H1 (cell line): ENCODE measurements at regions of chr2 and their contacts with region 1.

Region 1: GRCh38 chr2:47402805-47403608 is at the start of gene MSH2:
- DNase-seq: peak; percentile 91 to 95
- H3K4me3 ChIP-seq: peak within 1 kb of the TSS; percentile 67 to 92 (median 88)
- H3K27ac ChIP-seq: peak within 1 kb of the TSS; percentile 93
- H3K4me1 ChIP-seq: peaks cover 3 to 12% (median 7%) of the 10 kb centered on the region in 4 experiments; a peak in 5 of 7 replicates
- H3K27me3 ChIP-seq: no peaks in the 10 kb centered on the region
- CTCF ChIP-seq: peak in 2 of 3 experiments; percentile 0 to 2; a peak in 2 of 4 replicates
- EP300 ChIP-seq: peak in 1 of 2 experiments; percentile 85; a peak in 1 of 3 replicates
- POLR2A ChIP-seq: peak in 1 of 2 experiments; percentile 78; a peak in 2 of 3 replicates
- RAD21 ChIP-seq: peak; percentile 25 to 33; a peak in 3 of 4 replicates
- total RNA-seq, gene MSH2: 204 and 228 TPM in 2 replicates

Region 2: GRCh38 chr2:47056875-47057686 is 345.9 kb before region 1 on chr2:
- CTCF ChIA-PET with region 1: no interaction called
- POLR2A ChIA-PET with region 1: no interaction called
- DNase-seq: no peak
- H3K4me3 ChIP-seq: no peak overlapping the region
- H3K27ac ChIP-seq: no peak overlapping the region
- H3K4me1 ChIP-seq: peaks cover 3 to 19% (median 9%) of the 10 kb centered on the region in 4 experiments
- H3K27me3 ChIP-seq: no peaks in the 10 kb centered on the region
- CTCF ChIP-seq: no peak
- EP300 ChIP-seq: no peak
- POLR2A ChIP-seq: no peak
- RAD21 ChIP-seq: no peak

Region 3: GRCh38 chr2:47109007-47109375 is 294.0 kb before region 1 on chr2:
- CTCF ChIA-PET with region 1: no interaction called
- POLR2A ChIA-PET with region 1: no interaction called
- DNase-seq: no peak
- H3K4me3 ChIP-seq: no peak overlapping the region
- H3K27ac ChIP-seq: no peak overlapping the region
- H3K4me1 ChIP-seq: no peaks in the 10 kb centered on the region
- H3K27me3 ChIP-seq: no peaks in the 10 kb centered on the region
- CTCF ChIP-seq: no peak
- EP300 ChIP-seq: no peak
- POLR2A ChIP-seq: no peak
- RAD21 ChIP-seq: no peak

Region 4: GRCh38 chr2:47336259-47337238 is 66.5 kb before region 1 on chr2:
- CTCF ChIA-PET with region 1: interaction called, 15 read pairs
- POLR2A ChIA-PET with region 1: interaction called, 14 read pairs
- DNase-seq: no peak
- H3K4me3 ChIP-seq: no peak overlapping the region
- H3K27ac ChIP-seq: no peak overlapping the region
- H3K4me1 ChIP-seq: peaks cover 0 to 21% (median 11%) of the 10 kb centered on the region in 4 experiments
- H3K27me3 ChIP-seq: no peaks in the 10 kb centered on the region
- CTCF ChIP-seq: no peak
- EP300 ChIP-seq: no peak
- POLR2A ChIP-seq: no peak
- RAD21 ChIP-seq: no peak

Region 5: DNA sequence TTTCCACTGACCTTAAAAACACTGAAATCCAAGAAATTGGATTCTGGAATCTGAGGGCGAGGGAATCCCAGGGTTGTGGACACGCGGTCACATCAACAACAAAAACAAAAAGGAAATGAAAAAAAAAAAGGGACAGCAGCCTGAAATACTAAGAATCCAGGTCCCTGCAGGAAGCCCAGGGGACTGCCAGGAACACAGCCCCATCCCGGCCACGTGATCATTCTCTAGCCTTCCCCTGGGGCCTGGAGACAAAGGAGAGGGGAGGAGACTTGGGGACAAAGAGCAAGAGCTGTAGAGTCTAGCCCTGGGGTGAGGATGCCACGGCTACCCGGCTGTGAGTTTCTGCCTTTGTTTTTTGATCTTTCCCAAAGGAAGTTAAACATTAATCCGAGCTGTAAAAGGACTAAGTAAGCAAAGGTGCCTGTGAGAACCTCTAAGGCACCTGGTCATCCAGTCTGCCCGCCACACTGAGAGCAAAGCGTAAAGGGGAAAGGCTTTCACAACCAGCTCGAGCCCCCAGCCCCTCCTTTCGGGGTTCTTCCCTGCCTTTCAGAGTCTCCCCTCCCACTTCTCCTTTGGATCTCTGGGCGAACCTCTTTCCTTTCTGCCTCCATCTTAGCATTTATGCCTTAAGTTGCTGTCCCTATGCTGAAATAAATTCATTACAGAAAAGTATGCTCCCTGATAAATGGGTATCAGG is 58.0 kb before region 1 on chr2:
- CTCF ChIA-PET with region 1: interaction called, 3 read pairs
- POLR2A ChIA-PET with region 1: interaction called, 31 read pairs
- DNase-seq: peak; percentile 85 to 96
- H3K4me3 ChIP-seq: peak overlapping the region; percentile 31 to 57 (median 50); a peak in 7 of 8 replicates
- H3K27ac ChIP-seq: peak overlapping the region; percentile 97
- H3K4me1 ChIP-seq: peaks cover 7 to 18% (median 11%) of the 10 kb centered on the region in 4 experiments; a peak in 6 of 7 replicates
- H3K27me3 ChIP-seq: no peaks in the 10 kb centered on the region
- CTCF ChIP-seq: peak in 2 of 3 experiments; percentile 20 to 27; a peak in 2 of 4 replicates
- EP300 ChIP-seq: no peak
- POLR2A ChIP-seq: peak; percentile 96 to 99
- RAD21 ChIP-seq: peak in 1 of 2 experiments; percentile 9; a peak in 2 of 4 replicates

Region 6: DNA sequence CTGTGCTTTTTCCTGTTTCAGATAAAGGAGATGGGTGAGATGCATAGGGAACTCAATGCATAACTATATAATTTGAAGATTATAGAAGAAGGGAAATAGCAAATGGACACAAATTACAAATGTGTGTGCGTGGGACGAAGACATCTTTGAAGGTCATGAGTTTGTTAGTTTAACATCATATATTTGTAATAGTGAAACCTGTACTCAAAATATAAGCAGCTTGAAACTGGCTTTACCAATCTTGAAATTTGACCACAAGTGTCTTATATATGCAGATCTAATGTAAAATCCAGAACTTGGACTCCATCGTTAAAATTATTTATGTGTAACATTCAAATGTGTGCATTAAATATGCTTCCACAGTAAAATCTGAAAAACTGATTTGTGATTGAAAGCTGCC is 16.5 kb before region 1 on chr2:
- CTCF ChIA-PET with region 1: interaction called, 15 read pairs
- POLR2A ChIA-PET with region 1: interaction called, 13 read pairs
- DNase-seq: no peak
- H3K4me3 ChIP-seq: no peak overlapping the region
- H3K27ac ChIP-seq: no peak overlapping the region
- H3K4me1 ChIP-seq: no peaks in the 10 kb centered on the region
- H3K27me3 ChIP-seq: no peaks in the 10 kb centered on the region
- CTCF ChIP-seq: no peak
- EP300 ChIP-seq: no peak
- POLR2A ChIP-seq: no peak
- RAD21 ChIP-seq: no peak

Region 7: DNA sequence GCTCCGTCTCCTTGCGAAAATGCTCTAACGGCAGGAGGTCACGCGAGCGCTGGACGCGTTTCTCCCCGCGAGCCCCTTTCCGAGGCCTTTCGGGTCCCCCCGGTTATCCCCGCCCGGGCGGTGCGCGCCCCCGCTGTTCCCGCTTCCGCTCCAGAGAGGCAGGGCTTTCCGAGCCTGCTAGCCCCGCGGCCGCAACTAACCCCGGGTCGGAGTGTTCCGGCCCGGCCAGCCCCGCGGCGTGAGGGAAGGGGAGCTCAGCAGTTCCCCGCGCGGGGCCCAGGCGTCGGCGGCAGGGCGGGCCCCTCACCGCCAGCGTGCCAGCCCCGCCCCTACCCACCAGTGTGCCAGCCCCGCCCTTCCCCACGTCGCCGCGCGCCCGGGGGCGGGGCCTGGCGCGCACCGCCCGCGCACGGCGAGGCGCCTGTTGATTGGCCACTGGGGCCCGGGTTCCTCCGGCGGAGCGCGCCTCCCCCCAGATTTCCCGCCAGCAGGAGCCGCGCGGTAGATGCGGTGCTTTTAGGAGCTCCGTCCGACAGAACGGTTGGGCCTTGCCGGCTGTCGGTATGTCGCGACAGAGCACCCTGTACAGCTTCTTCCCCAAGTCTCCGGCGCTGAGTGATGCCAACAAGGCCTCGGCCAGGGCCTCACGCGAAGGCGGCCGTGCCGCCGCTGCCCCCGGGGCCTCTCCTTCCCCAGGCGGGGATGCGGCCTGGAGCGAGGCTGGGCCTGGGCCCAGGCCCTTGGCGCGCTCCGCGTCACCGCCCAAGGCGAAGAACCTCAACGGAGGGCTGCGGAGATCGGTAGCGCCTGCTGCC is 379.9 kb after region 1 on chr2 and contains the start of gene MSH6:
- CTCF ChIA-PET with region 1: no interaction called
- POLR2A ChIA-PET with region 1: interaction called, 12 read pairs
- DNase-seq: peak; percentile 62 to 91
- H3K4me3 ChIP-seq: peak within 1 kb of the TSS; percentile 62 to 98 (median 92)
- H3K27ac ChIP-seq: peak within 1 kb of the TSS; percentile 93
- H3K4me1 ChIP-seq: peaks cover 1 to 8% (median 3%) of the 10 kb centered on the region in 4 experiments; a peak in 5 of 7 replicates
- H3K27me3 ChIP-seq: no peaks in the 10 kb centered on the region
- CTCF ChIP-seq: peak in 1 of 3 experiments; percentile 1; a peak in 1 of 4 replicates
- EP300 ChIP-seq: no peak
- POLR2A ChIP-seq: peak; percentile 91 to 92
- RAD21 ChIP-seq: no peak
- total RNA-seq, gene MSH6: 289 and 301 TPM in 2 replicates